ENCODE measurements at regions of chr19 and their contacts with region 1.

Region 1: DNA sequence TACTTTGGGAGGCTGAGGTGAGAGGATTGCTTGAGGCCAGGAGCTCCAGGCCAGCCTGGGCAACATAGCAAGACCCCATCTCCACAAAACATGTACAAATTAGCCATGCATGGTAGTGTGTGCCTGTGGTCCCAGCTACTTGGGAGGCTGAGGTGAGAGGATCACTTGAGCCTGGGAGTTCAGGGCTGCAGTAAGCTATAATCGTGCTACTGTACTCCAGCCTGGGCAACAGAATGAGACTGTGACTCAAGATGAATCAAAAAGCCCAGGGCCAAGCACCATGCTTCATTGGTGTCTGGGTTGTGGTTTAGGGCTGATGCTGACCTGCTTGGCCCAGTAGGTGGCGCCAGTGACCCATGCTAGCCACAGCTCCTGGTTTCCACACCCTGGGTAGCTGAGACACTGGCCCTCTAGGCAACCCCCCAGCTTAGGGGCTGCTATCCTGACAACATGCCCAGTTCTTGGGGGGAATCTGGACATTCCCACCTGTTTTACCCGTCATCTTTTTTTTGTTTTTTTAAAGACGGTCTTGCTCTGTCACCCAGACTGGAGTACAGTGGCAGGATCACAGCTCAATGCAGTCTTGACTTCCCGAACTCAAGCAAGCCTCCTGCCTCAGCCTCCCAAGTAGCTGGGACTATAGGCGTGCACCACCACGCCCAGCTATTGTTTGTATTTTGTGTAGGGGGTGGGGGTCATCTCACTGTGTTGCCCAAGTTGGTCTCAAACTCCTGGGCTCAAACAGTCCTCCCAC is 5.5 kb downstream of the CCDC124 start:
- DNase-seq: peak; percentile 90
- H3K4me3 Mint-ChIP-seq: no peak overlapping the region
- H3K27ac Mint-ChIP-seq: no peak overlapping the region
- H3K4me1 Mint-ChIP-seq: peaks cover 6% of the 10 kb centered on the region
- H3K27me3 Mint-ChIP-seq: no peaks in the 10 kb centered on the region
- CTCF ChIP-seq: peak; percentile 86

Region 2: GRCh38 chr19:17680235-17680722 is 258.0 kb before region 1 on chr19:
- CTCF ChIA-PET with region 1: no interaction called
- POLR2A ChIA-PET with region 1: no interaction called
- intact Hi-C with region 1: no loop called
- DNase-seq: no peak
- H3K4me3 Mint-ChIP-seq: no peak overlapping the region
- H3K27ac Mint-ChIP-seq: no peak overlapping the region
- H3K4me1 Mint-ChIP-seq: no peaks in the 10 kb centered on the region
- H3K27me3 Mint-ChIP-seq: peaks cover 50% of the 10 kb centered on the region
- CTCF ChIP-seq: no peak

Region 3: GRCh38 chr19:17873786-17874757 is 64.2 kb before region 1 on chr19:
- CTCF ChIA-PET with region 1: interaction called, 90 read pairs
- POLR2A ChIA-PET with region 1: interaction called, 71 read pairs
- intact Hi-C with region 1: no loop called
- DNase-seq: peak; percentile 48
- H3K4me3 Mint-ChIP-seq: no peak overlapping the region
- H3K27ac Mint-ChIP-seq: no peak overlapping the region
- H3K4me1 Mint-ChIP-seq: no peaks in the 10 kb centered on the region
- H3K27me3 Mint-ChIP-seq: no peaks in the 10 kb centered on the region
- CTCF ChIP-seq: no peak

Region 4: GRCh38 chr19:17988161-17988560 is 49.9 kb after region 1 on chr19:
- CTCF ChIA-PET with region 1: interaction called, 224 read pairs
- POLR2A ChIA-PET with region 1: no interaction called
- intact Hi-C with region 1: no loop called
- DNase-seq: no peak
- H3K4me3 Mint-ChIP-seq: no peak overlapping the region
- H3K27ac Mint-ChIP-seq: no peak overlapping the region
- H3K4me1 Mint-ChIP-seq: no peaks in the 10 kb centered on the region
- H3K27me3 Mint-ChIP-seq: no peaks in the 10 kb centered on the region
- CTCF ChIP-seq: no peak

Region 5: GRCh38 chr19:18000935-18001778 is 62.9 kb after region 1 on chr19:
- CTCF ChIA-PET with region 1: interaction called, 224 read pairs
- POLR2A ChIA-PET with region 1: interaction called, 38 read pairs
- intact Hi-C with region 1: loop called (anchors 1 kb)
- DNase-seq: peak; percentile 88
- H3K4me3 Mint-ChIP-seq: peak overlapping the region; percentile 77
- H3K27ac Mint-ChIP-seq: peak overlapping the region; percentile 94
- H3K4me1 Mint-ChIP-seq: peaks cover 6% of the 10 kb centered on the region
- H3K27me3 Mint-ChIP-seq: no peaks in the 10 kb centered on the region
- CTCF ChIP-seq: no peak

Region 6: DNA sequence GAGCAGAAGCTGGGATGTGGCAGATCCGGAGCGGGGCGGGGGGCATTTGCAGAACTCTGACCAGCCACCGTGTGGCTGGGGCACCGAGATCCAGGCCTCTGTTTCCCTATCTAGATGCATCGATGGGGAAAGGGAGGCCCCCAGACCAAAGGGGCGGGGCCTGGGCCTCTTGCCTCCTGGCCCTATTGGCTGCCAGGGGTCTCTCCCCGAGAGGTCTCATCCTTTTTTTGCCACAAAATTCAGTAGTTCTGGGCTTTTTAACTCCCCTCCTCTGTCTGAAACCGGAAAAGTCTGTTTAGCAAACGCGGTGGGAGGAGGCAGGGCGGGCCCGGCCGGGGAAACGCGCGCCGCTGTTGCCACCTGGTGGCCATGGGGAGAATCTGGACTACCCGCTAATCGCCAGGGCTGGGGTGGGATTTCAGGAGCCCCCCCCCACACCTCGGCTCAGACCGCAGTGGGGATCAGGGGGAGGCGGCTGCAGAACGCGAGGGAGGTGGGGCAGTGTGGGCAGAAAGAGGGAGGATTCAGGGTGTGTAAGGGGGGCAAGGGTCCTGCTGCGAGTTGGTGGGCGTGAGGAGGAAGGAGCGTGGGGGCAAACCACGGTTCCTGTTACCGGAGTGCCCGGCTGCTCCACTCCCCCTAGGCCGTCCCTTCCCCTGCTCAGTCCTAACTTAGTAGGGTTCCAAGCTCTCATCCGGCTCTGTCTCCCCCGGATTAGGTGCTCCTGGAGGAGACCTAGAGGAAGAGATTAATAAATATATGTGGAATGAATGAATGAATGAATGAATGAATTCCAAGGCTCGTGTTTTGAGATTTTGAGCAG is 120.2 kb after region 1 on chr19:
- CTCF ChIA-PET with region 1: interaction called, 10 read pairs
- POLR2A ChIA-PET with region 1: no interaction called
- intact Hi-C with region 1: loop called (anchors 2 kb)
- DNase-seq: peak; percentile 80
- H3K4me3 Mint-ChIP-seq: no peak overlapping the region
- H3K27ac Mint-ChIP-seq: peak overlapping the region; percentile 57
- H3K4me1 Mint-ChIP-seq: peaks cover 5% of the 10 kb centered on the region
- H3K27me3 Mint-ChIP-seq: no peaks in the 10 kb centered on the region
- CTCF ChIP-seq: peak; percentile 88

Measured in MCF 10A (cell line).